Caco-2 (cell line): ENCODE measurements at regions of chr3 and their contacts with region 1.

Region 1: DNA sequence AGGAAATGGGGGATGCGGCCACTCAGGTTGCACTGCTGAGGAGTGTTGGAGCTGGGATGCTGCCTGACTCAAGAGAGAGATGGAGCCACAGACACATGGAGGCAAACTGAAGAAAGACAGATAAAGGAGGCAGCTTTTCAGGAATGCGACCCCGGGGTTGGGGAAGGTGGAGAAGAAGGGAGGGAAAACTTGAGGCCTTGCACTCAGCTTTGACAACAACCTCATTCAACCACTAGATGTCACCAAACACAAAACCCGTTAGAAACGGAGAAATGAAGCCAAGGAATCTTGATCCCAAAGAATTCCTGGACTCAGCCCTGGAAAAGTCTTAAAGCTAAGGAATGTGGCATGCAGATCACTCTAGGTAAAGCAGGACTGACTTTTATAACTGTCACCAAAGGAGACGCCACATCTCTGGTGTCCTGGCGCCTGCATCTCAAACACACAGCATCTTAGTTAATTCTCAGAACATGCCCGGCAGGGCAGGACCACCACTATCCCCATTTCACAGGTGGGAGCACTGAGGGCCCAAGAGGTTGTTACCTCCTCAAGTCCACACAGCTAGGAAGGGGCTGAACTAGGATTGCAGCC is 59.6 kb upstream of the LMCD1 start:
- DNase-seq: peak; percentile 70 to 71
- H3K4me3 ChIP-seq: no peak overlapping the region
- H3K4me3 Mint-ChIP-seq: no peak overlapping the region
- H3K27ac Mint-ChIP-seq: no peak overlapping the region
- H3K4me1 ChIP-seq: peaks cover 33% of the 10 kb centered on the region
- H3K4me1 Mint-ChIP-seq: peaks cover 7% of the 10 kb centered on the region
- H3K27me3 ChIP-seq: no peaks in the 10 kb centered on the region
- H3K27me3 Mint-ChIP-seq: no peaks in the 10 kb centered on the region
- CTCF ChIP-seq: peak; percentile 67 to 69

Region 2: DNA sequence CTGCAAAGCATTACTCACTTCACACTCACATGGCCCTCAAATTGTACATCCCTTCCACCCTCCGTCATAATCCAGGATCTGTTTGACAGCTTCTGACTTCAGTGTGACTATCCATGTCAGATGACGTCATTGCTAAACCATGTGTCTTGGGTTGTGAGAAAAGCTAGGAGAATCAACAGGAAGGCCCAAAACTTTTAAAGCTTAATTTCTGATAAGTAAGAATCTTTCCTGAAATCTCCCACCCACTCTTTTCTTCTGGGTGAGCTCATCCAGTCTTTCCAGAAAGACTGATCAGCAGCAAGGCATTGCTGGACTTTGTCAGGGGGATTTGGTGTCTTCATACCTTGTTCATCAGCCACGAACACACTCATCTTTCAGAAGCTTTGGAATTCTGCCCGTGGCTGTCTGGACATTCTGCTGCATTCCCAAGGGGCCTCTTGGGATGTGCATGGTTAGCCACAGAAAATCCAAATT is 48.1 kb after region 1 on chr3:
- CTCF ChIA-PET with region 1: no interaction called
- POLR2A ChIA-PET with region 1: interaction called, 3 read pairs
- intact Hi-C with region 1: loop called (anchors 1 kb)
- DNase-seq: peak; percentile 37 to 52
- H3K4me3 ChIP-seq: no peak overlapping the region
- H3K4me3 Mint-ChIP-seq: no peak overlapping the region
- H3K27ac Mint-ChIP-seq: no peak overlapping the region
- H3K4me1 ChIP-seq: peaks cover 82% of the 10 kb centered on the region
- H3K4me1 Mint-ChIP-seq: peaks cover 54% of the 10 kb centered on the region
- H3K27me3 ChIP-seq: no peaks in the 10 kb centered on the region
- H3K27me3 Mint-ChIP-seq: no peaks in the 10 kb centered on the region
- CTCF ChIP-seq: no peak

Region 3: DNA sequence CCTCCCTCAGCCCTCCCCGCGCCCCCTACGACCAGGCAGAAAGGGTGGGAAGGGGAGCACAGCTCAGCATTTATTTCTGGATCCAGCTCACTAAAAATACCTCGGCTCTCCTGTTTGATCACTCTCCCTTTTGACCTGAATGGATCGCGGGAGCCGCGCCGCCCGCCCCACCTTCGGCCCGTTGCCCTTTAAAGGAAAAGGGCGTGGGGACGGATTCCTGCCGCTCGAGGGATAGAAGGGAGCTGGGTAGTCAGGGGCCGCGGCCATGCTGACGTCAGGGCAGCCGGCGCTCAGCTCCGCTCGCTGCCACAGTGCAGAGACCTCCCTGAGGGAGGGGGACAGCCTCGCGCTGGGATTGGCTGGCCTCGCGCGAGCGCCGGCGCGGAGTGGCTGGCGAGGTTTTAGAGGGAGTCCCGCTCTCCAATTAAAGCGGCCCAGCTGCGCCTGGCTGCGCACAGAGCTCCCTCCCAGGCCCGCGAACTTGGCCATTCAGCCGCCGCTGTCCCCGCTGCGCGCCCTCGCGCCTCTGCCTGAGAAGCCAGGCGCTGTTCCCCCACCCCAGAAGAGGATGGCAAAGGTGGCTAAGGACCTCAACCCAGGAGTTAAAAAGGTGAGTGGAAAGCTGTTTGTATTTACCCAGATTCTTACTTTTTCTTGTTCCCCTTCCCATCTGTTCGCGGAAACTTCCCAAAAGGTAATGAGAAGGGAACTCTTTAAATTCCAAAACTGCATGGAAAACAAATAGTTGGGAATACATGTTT is 59.5 kb after region 1 on chr3 and contains the start of gene LMCD1:
- CTCF ChIA-PET with region 1: interaction called, 26 read pairs
- POLR2A ChIA-PET with region 1: interaction called, 20 read pairs
- intact Hi-C with region 1: loop called (anchors 1 kb)
- DNase-seq: peak; percentile 96 to 98
- H3K4me3 ChIP-seq: peak within 1 kb of the TSS; percentile 59
- H3K4me3 Mint-ChIP-seq: peak within 1 kb of the TSS; percentile 94
- H3K27ac Mint-ChIP-seq: peak within 1 kb of the TSS; percentile 99
- H3K4me1 ChIP-seq: peaks cover 67% of the 10 kb centered on the region
- H3K4me1 Mint-ChIP-seq: peaks cover 52% of the 10 kb centered on the region
- H3K27me3 ChIP-seq: no peaks in the 10 kb centered on the region
- H3K27me3 Mint-ChIP-seq: no peaks in the 10 kb centered on the region
- CTCF ChIP-seq: peak in 1 of 2 experiments; percentile 7
- total RNA-seq, gene LMCD1: 23.9 and 24.7 TPM in 2 replicates

Region 4: GRCh38 chr3:8607234-8608040 is 165.4 kb after region 1 on chr3:
- CTCF ChIA-PET with region 1: interaction called, 5 read pairs
- POLR2A ChIA-PET with region 1: no interaction called
- intact Hi-C with region 1: loop called (anchors 1 kb)
- DNase-seq: peak; percentile 69 to 73
- H3K4me3 ChIP-seq: no peak overlapping the region
- H3K4me3 Mint-ChIP-seq: no peak overlapping the region
- H3K27ac Mint-ChIP-seq: no peak overlapping the region
- H3K4me1 ChIP-seq: peaks cover 12% of the 10 kb centered on the region; the same call in 1 of the 2 replicates
- H3K4me1 Mint-ChIP-seq: no peaks in the 10 kb centered on the region
- H3K27me3 ChIP-seq: no peaks in the 10 kb centered on the region
- H3K27me3 Mint-ChIP-seq: no peaks in the 10 kb centered on the region
- CTCF ChIP-seq: peak; percentile 52 to 69

Region 5: GRCh38 chr3:8622873-8623691 is 181.0 kb after region 1 on chr3:
- CTCF ChIA-PET with region 1: interaction called, 3 read pairs
- POLR2A ChIA-PET with region 1: no interaction called
- intact Hi-C with region 1: loop called (anchors 1 kb)
- DNase-seq: peak; percentile 70 to 78
- H3K4me3 ChIP-seq: no peak overlapping the region
- H3K4me3 Mint-ChIP-seq: no peak overlapping the region
- H3K27ac Mint-ChIP-seq: peak overlapping the region; percentile 55
- H3K4me1 ChIP-seq: peaks cover 7% of the 10 kb centered on the region; the same call in 1 of the 2 replicates
- H3K4me1 Mint-ChIP-seq: peaks cover 7% of the 10 kb centered on the region
- H3K27me3 ChIP-seq: no peaks in the 10 kb centered on the region
- H3K27me3 Mint-ChIP-seq: no peaks in the 10 kb centered on the region
- CTCF ChIP-seq: peak; percentile 88

Region 6: GRCh38 chr3:8655387-8655835 is 213.3 kb after region 1 on chr3:
- CTCF ChIA-PET with region 1: no interaction called
- POLR2A ChIA-PET with region 1: no interaction called
- intact Hi-C with region 1: loop called (anchors 1 kb)
- DNase-seq: peak; percentile 70 to 76
- H3K4me3 ChIP-seq: no peak overlapping the region
- H3K4me3 Mint-ChIP-seq: peak overlapping the region; percentile 37
- H3K27ac Mint-ChIP-seq: peak overlapping the region; percentile 89
- H3K4me1 ChIP-seq: peaks cover 69% of the 10 kb centered on the region
- H3K4me1 Mint-ChIP-seq: peaks cover 37% of the 10 kb centered on the region
- H3K27me3 ChIP-seq: no peaks in the 10 kb centered on the region
- H3K27me3 Mint-ChIP-seq: no peaks in the 10 kb centered on the region
- CTCF ChIP-seq: no peak